Natural killer cell (primary cell): ENCODE measurements at regions of chrX and their contacts with region 1.

Region 1: GRCh38 chrX:41116948-41117347 is 31.7 kb downstream of the USP9X start:
- DNase-seq: peak in 1 of 2 donors; percentile 63
- ATAC-seq: peak; percentile 64 to 79 (median 78)
- H3K4me3 ChIP-seq: no peak overlapping the region
- H3K4me3 Mint-ChIP-seq: peak overlapping the region; percentile 40
- H3K27ac ChIP-seq: peak overlapping the region; percentile 38
- H3K27ac Mint-ChIP-seq: peak overlapping the region; percentile 52 to 83
- H3K4me1 ChIP-seq: peaks cover 13% of the 10 kb centered on the region
- H3K4me1 Mint-ChIP-seq: peaks cover 54 to 59% of the 10 kb centered on the region in 2 donors
- H3K27me3 ChIP-seq: no peaks in the 10 kb centered on the region
- H3K27me3 Mint-ChIP-seq: no peaks in the 10 kb centered on the region
- CTCF ChIP-seq: no peak

Region 2: GRCh38 chrX:40877887-40878286 is 239.1 kb before region 1 on chrX:
- intact Hi-C with region 1: loop called (anchors 1 kb)
- DNase-seq: peak in 1 of 2 donors; percentile 62
- ATAC-seq: no peak
- H3K4me3 ChIP-seq: no peak overlapping the region
- H3K4me3 Mint-ChIP-seq: no peak overlapping the region
- H3K27ac ChIP-seq: no peak overlapping the region
- H3K27ac Mint-ChIP-seq: no peak overlapping the region
- H3K4me1 ChIP-seq: no peaks in the 10 kb centered on the region
- H3K4me1 Mint-ChIP-seq: no peaks in the 10 kb centered on the region
- H3K27me3 ChIP-seq: no peaks in the 10 kb centered on the region
- H3K27me3 Mint-ChIP-seq: peaks cover 4 to 39% of the 10 kb centered on the region in 2 donors
- CTCF ChIP-seq: peak; percentile 33

Region 3: DNA sequence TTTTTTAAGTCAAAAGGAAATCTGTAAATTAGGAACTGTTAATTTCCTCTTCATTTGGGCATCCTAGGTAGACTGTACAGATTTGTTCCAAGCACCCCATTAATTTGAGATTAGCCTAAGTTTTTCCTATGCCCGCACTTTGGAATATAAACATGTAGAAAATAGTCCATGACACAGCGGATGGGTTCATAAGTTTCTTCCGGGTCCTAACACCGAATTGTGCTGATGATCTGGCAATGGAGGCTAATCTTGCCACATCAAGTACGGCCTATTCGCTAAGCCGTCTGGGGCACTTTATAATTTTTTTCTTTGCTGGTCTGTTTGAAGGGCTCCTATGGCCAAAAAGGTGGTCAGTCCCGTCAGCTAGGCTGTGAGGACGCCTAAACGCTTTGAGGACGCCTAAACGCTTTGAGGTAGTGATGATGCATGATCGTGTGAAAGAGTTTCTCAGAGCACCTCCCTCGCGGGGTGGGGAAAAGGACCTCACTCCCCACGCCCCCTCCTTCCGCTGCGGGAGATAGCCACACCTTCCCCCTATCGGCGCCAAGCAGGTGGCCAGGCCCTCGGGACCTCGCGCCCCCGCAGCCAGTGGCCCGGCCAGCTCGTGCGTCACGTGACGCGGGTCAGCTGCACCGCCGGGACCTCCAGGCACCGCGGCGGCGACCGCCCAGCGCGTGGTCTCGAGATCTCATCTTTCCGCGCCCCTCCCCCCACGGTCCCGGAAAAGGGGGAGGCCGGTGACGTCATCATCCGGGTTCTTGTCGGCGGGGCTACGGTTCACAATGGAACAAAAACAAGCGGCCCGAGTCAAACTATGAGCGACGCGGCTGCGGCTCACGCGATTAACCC is 32.7 kb before region 1 on chrX:
- intact Hi-C with region 1: loop called (anchors 5 kb)
- DNase-seq: peak; percentile 96 to 97
- ATAC-seq: peak; percentile 69 to 85 (median 70)
- H3K4me3 ChIP-seq: peak overlapping the region; percentile 96
- H3K4me3 Mint-ChIP-seq: peak overlapping the region; percentile 93
- H3K27ac ChIP-seq: peak overlapping the region; percentile 100
- H3K27ac Mint-ChIP-seq: peak overlapping the region; percentile 95 to 97
- H3K4me1 ChIP-seq: peaks cover 5% of the 10 kb centered on the region
- H3K4me1 Mint-ChIP-seq: peaks cover 15 to 44% of the 10 kb centered on the region in 2 donors
- H3K27me3 ChIP-seq: no peaks in the 10 kb centered on the region
- H3K27me3 Mint-ChIP-seq: peaks cover 0 to 13% of the 10 kb centered on the region in 2 donors
- CTCF ChIP-seq: no peak